ENCODE measurements at regions of chr1 and their contacts with region 1.

Region 1: GRCh38 chr1:244970661-244971551 is 106.6 kb upstream of the HNRNPU start:
- DNase-seq: peak; percentile 90 to 99 (median 94)
- ATAC-seq: peak; percentile 71 to 73
- H3K4me3 Mint-ChIP-seq: peak overlapping the region; percentile 89 to 98 (median 94)
- H3K27ac Mint-ChIP-seq: peak overlapping the region; percentile 99 to 100 (median 99)
- H3K4me1 Mint-ChIP-seq: peaks cover 6 to 26% (median 21%) of the 10 kb centered on the region in 4 donors
- H3K27me3 Mint-ChIP-seq: no peaks in the 10 kb centered on the region

Region 2: DNA sequence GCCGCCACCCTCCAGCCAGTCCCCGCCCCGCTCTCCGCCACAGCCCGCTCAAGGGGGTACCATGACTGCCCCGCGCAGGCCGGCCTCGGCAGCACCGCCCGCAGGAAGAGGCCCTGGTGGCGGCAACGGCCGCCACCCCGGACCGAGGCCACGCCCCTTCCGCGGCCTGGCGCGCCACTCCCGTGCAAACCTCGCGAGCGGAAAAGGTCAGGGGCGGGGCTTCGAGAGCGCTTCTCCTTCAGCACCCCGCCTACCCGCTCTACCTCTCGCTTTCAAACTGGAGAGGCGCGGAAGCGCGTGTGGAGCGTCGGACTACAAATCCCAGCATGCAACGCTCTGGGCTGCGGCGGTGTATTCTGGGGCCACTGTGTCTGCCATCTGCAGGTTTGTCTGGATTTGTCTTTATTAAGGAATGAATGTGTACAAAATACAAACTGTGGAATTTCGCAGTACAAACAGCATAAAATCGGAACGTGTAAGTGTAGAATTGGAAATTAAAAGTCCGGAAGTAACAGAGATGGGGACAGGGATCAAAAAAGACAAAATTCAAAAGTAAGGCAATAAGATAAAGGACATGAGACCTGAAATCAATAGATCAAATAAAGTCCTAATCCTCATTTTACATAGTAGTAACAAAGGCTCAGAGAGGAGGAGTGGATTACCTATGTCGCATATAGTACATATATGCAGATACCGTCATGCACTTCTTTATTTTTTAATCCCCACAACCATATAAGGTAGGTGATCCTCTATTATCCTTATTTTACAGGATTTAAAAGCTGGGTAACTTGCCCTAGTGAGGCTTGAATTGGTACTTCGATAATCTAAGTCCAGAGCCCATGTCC is 518.7 kb before region 1 on chr1:
- POLR2A ChIA-PET with region 1: interaction called, 10 read pairs
- DNase-seq: peak; percentile 92 to 99 (median 98)
- ATAC-seq: peak; percentile 82 to 88
- H3K4me3 Mint-ChIP-seq: peak overlapping the region; percentile 81 to 99 (median 92)
- H3K27ac Mint-ChIP-seq: peak overlapping the region; percentile 93 to 99 (median 97)
- H3K4me1 Mint-ChIP-seq: peaks cover 22 to 41% (median 38%) of the 10 kb centered on the region in 4 donors
- H3K27me3 Mint-ChIP-seq: no peaks in the 10 kb centered on the region

Region 3: GRCh38 chr1:244918421-244919319 is 52.2 kb before region 1 on chr1:
- POLR2A ChIA-PET with region 1: interaction called, 17 read pairs
- DNase-seq: peak; percentile 46 to 87 (median 79)
- ATAC-seq: peak; percentile 97
- H3K4me3 Mint-ChIP-seq: peak overlapping the region; percentile 85 to 98 (median 92)
- H3K27ac Mint-ChIP-seq: peak overlapping the region; percentile 58 to 97 (median 90)
- H3K4me1 Mint-ChIP-seq: peaks cover 1 to 20% (median 9%) of the 10 kb centered on the region in 4 donors
- H3K27me3 Mint-ChIP-seq: peaks cover 0 to 1% (median 0%) of the 10 kb centered on the region in 5 donors

Region 4: DNA sequence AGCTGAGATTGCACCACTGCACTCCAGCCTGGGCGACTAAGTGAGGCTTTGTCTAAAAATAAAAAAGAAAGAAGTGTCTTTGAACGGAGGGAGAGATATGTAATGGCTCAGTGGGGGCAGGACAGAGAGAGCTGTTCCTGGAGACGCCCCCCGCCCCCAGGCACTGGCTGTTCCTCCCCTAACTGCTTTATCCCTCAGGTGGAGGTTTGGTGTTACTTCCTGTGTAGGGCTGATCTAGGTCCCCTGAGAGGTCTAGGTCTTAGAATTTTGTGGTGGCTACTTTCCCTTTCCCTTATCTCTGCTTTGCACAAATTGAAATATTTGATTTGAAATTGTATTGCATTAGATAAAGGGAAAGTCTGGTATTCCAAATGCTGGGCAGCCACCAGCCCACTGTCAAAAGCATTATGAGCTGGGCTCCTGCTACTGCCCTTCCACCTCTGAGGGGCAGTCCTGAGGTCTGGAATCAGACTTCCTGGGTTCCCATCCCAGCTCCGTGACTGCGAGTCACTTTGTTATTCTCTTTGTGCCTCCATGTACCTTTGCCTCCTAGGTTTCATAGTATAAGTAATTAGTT is 49.1 kb after region 1 on chr1:
- POLR2A ChIA-PET with region 1: interaction called, 11 read pairs
- DNase-seq: no peak
- ATAC-seq: peak in 1 of 2 donors; percentile 46
- H3K4me3 Mint-ChIP-seq: no peak overlapping the region
- H3K27ac Mint-ChIP-seq: no peak overlapping the region
- H3K4me1 Mint-ChIP-seq: peaks cover 0 to 18% (median 3%) of the 10 kb centered on the region in 4 donors
- H3K27me3 Mint-ChIP-seq: no peaks in the 10 kb centered on the region

Measured in naive thymus-derived CD8-positive, alpha-beta T cell (primary cell).